Activated CD4-positive, alpha-beta memory T cell treated with anti-CD3 and anti-CD28 coated beads, Interleukin-2, amount 10 ng/mL, durations not matched to agents 7 days and 5 days (primary cell): ENCODE measurements at regions of chr5 and their contacts with region 1.

Region 1: DNA sequence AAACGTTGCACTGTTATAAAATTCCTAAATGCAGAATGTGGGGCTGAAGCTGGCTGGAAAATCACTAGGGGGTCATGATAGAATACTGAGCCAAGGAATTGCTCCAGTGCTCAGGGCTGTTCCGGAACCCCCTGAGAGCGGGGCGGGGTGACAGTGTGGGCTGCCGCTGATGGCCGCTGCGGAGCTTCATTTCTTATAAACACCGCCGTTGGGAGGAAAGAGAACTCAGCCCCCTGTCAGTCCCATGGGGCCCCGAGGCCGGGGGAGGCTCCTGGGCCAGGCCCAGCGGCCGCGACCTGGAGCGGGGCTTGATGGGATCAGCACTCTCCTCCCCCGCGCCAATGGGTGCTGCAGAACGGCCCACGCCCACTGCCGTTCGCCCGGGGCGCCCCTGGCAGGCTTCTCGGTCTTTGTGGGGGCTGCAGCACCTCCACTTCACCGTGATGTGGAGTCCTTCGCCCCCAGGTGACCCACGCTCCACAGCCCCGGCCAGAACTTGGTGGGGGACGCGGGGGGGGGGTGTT is 5.2 kb upstream of the IRF1 start:
- DNase-seq: peak; percentile 82
- H3K4me3 Mint-ChIP-seq: peak overlapping the region; percentile 96
- H3K27ac Mint-ChIP-seq: peak overlapping the region; percentile 91
- H3K4me1 Mint-ChIP-seq: peaks cover 76% of the 10 kb centered on the region
- H3K27me3 Mint-ChIP-seq: no peaks in the 10 kb centered on the region

Region 2: GRCh38 chr5:132303589-132303988 is 192.1 kb before region 1 on chr5:
- CTCF ChIA-PET with region 1: no interaction called
- POLR2A ChIA-PET with region 1: no interaction called
- DNase-seq: no peak
- H3K4me3 Mint-ChIP-seq: no peak overlapping the region
- H3K27ac Mint-ChIP-seq: no peak overlapping the region
- H3K4me1 Mint-ChIP-seq: no peaks in the 10 kb centered on the region
- H3K27me3 Mint-ChIP-seq: peaks cover 2% of the 10 kb centered on the region

Region 3: GRCh38 chr5:132369474-132370180 is 126.1 kb before region 1 on chr5 and contains the start of gene SLC22A5:
- CTCF ChIA-PET with region 1: interaction called, 3 read pairs
- POLR2A ChIA-PET with region 1: interaction called, 10 read pairs
- DNase-seq: peak; percentile 73
- H3K4me3 Mint-ChIP-seq: peak within 1 kb of the TSS; percentile 71
- H3K27ac Mint-ChIP-seq: no peak within 1 kb of the TSS
- H3K4me1 Mint-ChIP-seq: peaks cover 19% of the 10 kb centered on the region
- H3K27me3 Mint-ChIP-seq: no peaks in the 10 kb centered on the region
- total RNA-seq, gene SLC22A5: 2.7 to 3.3 TPM

Region 4: GRCh38 chr5:132386644-132387286 is 109.0 kb before region 1 on chr5:
- CTCF ChIA-PET with region 1: interaction called, 333 read pairs
- POLR2A ChIA-PET with region 1: interaction called, 138 read pairs
- DNase-seq: peak; percentile 83
- H3K4me3 Mint-ChIP-seq: no peak overlapping the region
- H3K27ac Mint-ChIP-seq: peak overlapping the region; percentile 31
- H3K4me1 Mint-ChIP-seq: peaks cover 52% of the 10 kb centered on the region
- H3K27me3 Mint-ChIP-seq: no peaks in the 10 kb centered on the region

Region 5: GRCh38 chr5:132410451-132411381 is 85.0 kb before region 1 on chr5:
- CTCF ChIA-PET with region 1: interaction called, 47 read pairs
- POLR2A ChIA-PET with region 1: interaction called, 399 read pairs
- DNase-seq: peak; percentile 89
- H3K4me3 Mint-ChIP-seq: peak overlapping the region; percentile 95
- H3K27ac Mint-ChIP-seq: peak overlapping the region; percentile 99
- H3K4me1 Mint-ChIP-seq: peaks cover 59% of the 10 kb centered on the region
- H3K27me3 Mint-ChIP-seq: no peaks in the 10 kb centered on the region

Region 6: GRCh38 chr5:132419502-132420468 is 75.9 kb before region 1 on chr5:
- CTCF ChIA-PET with region 1: interaction called, 66 read pairs
- POLR2A ChIA-PET with region 1: interaction called, 1,155 read pairs
- DNase-seq: peak; percentile 72
- H3K4me3 Mint-ChIP-seq: peak overlapping the region; percentile 65
- H3K27ac Mint-ChIP-seq: peak overlapping the region; percentile 91
- H3K4me1 Mint-ChIP-seq: peaks cover 95% of the 10 kb centered on the region
- H3K27me3 Mint-ChIP-seq: no peaks in the 10 kb centered on the region

Region 7: DNA sequence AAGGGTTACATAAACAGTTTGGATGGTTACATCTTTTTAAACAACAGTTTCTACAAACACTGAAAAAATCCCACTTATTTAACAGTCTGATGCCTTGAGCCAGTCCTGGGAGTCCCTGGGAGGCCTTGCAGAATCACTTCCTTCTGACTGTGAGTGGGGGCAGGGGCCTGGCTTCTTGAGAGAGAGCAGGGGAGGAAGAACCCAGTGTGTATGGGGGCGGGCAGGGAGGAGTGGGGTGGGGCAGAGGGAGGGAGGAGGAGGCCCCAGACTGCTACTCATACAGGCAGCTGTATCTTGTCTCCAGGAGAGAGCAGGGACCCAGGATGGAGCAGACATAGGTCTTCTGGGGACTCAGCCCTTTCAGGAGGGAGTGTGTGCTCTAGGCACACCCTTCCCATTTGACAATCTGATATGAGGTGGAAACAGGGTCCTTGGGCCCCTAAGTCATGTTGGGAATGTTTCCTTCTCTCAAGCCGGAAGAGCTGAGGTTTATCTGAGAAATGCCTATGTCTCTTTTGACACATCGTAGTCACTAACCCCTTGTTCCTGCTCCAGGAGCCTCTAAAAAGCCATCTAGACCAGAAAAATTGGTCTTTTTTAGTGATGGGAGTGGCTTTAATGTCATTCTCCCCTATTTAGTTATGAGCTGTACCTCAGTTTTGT is 58.0 kb before region 1 on chr5:
- CTCF ChIA-PET with region 1: interaction called, 5 read pairs
- POLR2A ChIA-PET with region 1: interaction called, 1,155 read pairs
- DNase-seq: peak; percentile 72
- H3K4me3 Mint-ChIP-seq: peak overlapping the region; percentile 54
- H3K27ac Mint-ChIP-seq: peak overlapping the region; percentile 87
- H3K4me1 Mint-ChIP-seq: peaks cover 82% of the 10 kb centered on the region
- H3K27me3 Mint-ChIP-seq: no peaks in the 10 kb centered on the region

Region 8: DNA sequence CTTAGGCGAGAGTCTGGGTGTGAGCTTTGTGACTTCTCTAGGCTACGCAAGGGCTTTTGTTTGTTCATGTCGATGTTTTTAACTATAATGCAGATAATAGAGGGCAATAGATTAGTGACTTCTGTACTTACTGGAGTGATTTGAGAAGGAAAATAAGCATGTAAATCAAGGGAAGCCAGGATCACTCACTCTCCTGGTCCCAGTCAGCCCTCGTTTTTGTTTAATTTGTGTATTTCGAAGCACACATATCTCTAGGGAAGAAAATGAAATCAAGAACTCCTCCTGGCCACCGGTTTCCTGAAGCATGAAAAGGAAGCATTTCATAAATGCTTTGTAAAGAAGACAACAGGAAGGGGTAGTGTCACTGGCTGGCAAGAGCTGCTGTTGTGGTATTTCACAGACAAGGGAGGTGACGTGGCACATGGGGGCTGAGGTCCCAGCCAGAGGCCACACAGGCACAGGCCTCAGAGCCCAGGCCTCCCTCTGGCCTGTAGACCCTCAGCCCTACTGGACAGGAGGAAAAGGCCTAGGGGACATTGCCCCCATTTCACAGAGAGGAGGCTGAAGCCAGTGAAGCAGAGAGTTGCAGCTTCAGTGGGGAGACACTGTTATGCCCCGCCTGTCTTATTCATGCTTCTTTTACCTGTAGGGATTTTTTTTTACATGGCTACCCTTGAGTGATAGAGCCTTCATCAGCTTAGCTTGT is 39.3 kb before region 1 on chr5:
- CTCF ChIA-PET with region 1: interaction called, 15 read pairs
- POLR2A ChIA-PET with region 1: interaction called, 563 read pairs
- DNase-seq: peak; percentile 75
- H3K4me3 Mint-ChIP-seq: peak overlapping the region; percentile 53
- H3K27ac Mint-ChIP-seq: peak overlapping the region; percentile 99
- H3K4me1 Mint-ChIP-seq: peaks cover 91% of the 10 kb centered on the region
- H3K27me3 Mint-ChIP-seq: no peaks in the 10 kb centered on the region

Region 9: GRCh38 chr5:132667761-132668705 is 172.3 kb after region 1 on chr5:
- CTCF ChIA-PET with region 1: no interaction called
- POLR2A ChIA-PET with region 1: no interaction called
- DNase-seq: no peak
- H3K4me3 Mint-ChIP-seq: no peak overlapping the region
- H3K27ac Mint-ChIP-seq: no peak overlapping the region
- H3K4me1 Mint-ChIP-seq: peaks cover 34% of the 10 kb centered on the region
- H3K27me3 Mint-ChIP-seq: no peaks in the 10 kb centered on the region